BJ (cell line): ENCODE measurements at regions of chr9 and their contacts with region 1.

Region 1: GRCh38 chr9:127561619-127562500 is 50.2 kb upstream of the STXBP1 start:
- DNase-seq: peak; percentile 98
- H3K4me3 ChIP-seq: no peak overlapping the region
- H3K27me3 ChIP-seq: no peaks in the 10 kb centered on the region
- CTCF ChIP-seq: no peak

Region 2: DNA sequence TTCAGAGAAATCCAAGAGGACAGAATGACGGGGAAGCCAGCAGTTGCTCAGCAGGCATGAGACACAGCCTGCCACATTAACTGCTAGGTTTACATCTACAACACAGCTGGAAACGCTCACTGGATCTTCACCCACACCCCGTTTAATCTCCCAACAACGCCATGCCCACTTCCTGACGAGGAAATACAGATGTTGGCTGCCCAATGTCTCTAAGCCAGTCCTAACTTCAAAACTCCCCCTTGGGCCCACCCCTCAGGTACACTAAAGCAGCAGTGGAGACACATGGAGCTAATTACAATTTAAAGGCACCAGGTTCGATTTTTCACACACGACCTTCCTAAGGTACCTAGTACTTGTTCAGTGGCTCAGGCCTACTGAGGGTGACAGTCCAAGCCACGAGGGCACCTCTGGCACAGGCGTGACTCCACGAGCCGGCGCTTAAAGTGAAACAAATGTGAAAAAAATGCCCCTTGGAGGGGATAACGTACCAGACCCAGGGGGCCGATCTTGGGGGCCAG is 111.6 kb before region 1 on chr9:
- CTCF ChIA-PET with region 1: no interaction called
- POLR2A ChIA-PET with region 1: no interaction called
- DNase-seq: no peak
- H3K4me3 ChIP-seq: peak overlapping the region; percentile 96
- H3K27me3 ChIP-seq: no peaks in the 10 kb centered on the region
- CTCF ChIP-seq: no peak

Region 3: DNA sequence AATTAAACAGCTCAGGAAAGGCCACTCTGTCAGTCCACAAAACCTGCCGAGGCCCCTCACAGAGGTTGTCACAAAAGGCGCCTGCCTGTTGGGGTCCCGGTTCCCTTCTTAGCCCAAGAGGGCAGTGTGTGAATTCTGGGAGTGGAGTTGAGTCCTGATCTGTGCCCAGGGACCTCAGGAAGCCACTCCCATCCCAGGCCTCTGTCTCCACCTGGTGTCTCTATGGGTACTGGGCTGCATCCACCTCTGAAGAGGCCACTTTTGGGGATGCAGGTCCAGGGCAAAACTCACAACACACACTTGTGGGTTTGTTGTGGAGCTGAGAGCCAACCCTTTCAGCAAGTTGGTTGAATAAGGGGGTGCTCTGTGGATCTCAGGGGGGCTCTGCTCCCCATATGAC is 24.1 kb before region 1 on chr9:
- CTCF ChIA-PET with region 1: interaction called, 7 read pairs
- POLR2A ChIA-PET with region 1: interaction called, 10 read pairs
- DNase-seq: no peak
- H3K4me3 ChIP-seq: no peak overlapping the region
- H3K27me3 ChIP-seq: no peaks in the 10 kb centered on the region
- CTCF ChIP-seq: peak; percentile 47

Region 4: DNA sequence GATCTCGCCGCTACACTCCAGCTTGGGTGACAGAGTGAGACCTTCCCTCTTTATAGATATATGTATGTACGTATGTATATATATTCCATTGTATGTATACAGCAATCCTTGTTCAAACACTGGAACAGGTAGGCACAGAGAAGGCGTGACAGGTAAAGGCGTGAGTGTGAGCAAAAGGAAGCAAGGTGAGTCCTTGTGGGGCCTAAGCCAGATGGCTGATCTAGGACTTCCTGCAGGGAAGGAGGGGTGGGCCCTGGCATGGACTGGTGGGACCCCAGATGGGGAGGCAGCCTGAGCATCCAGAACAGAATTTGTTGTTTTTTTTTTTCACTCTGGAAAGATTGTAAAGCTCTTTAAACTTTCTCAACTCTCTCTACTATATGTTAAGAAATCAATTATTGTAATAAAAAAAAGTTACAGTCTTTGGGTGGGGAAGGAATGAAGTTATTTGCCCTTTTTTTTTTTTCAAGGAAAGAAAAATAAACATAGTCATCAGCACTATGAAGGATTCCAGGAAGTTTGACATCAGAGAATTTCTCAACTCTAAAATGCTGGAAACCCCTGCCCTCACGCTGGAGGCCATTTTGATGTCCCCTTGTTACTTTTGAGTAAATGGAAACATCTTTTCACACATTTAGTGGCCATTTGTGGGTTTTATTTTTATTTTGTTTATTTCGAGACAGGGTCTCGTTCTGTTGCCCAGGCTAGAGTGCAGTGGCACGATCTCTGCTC is 11.3 kb after region 1 on chr9:
- CTCF ChIA-PET with region 1: interaction called, 4 read pairs
- POLR2A ChIA-PET with region 1: interaction called, 11 read pairs
- DNase-seq: peak; percentile 67
- H3K4me3 ChIP-seq: no peak overlapping the region
- H3K27me3 ChIP-seq: no peaks in the 10 kb centered on the region
- CTCF ChIP-seq: no peak